ENCODE measurements at regions of chr10 and their contacts with region 1.

Region 1: DNA sequence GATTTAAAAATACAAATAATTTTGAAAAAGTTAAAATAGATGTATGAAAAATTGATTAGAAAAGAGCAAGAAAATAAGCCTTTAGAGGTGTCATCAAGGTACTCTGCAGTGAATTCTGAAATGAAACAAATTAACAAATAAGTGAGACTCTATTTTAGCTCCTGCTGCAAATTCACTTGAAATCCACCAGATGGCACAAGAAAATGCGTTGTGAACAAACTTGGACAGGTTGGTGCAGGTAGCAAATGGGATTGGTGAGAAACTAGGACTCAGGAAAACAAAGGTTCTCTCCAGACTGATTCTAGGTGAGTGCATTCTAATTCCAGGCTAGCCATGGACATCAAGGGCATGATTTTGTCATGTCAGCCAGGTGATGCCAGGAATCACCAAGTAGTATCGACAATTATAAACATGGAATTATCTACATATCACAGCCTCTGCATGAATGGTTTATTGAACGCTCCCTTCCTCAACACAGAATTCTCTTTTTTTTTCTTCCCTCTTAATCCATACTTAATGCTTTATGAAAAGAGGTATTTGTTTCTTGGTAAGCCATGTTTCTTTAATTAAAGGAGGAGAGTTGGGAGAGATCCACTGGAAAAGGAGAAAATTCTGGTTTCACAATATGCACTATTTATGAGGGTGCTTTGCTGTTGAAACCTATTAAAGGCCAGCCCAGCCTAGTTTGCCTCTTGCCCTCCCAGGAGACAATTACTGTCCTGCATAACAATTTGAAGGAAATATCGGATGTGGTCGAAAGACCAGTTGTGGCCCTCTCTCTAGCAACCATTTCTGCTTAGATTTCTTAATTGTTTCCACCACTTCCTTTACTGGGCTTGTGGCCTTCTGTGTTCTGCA is 118.1 kb downstream of the ZNF365 start:
- DNase-seq: no peak
- ATAC-seq: peak; percentile 49
- H3K4me3 Mint-ChIP-seq: no peak overlapping the region
- H3K27ac Mint-ChIP-seq: no peak overlapping the region
- H3K4me1 Mint-ChIP-seq: peaks cover 27% of the 10 kb centered on the region
- H3K27me3 Mint-ChIP-seq: peaks cover 4% of the 10 kb centered on the region
- CTCF ChIP-seq: no peak

Region 2: GRCh38 chr10:62264702-62265436 is 227.4 kb before region 1 on chr10:
- CTCF ChIA-PET with region 1: no interaction called
- POLR2A ChIA-PET with region 1: no interaction called
- intact Hi-C with region 1: no loop called
- DNase-seq: no peak
- ATAC-seq: no peak
- H3K4me3 Mint-ChIP-seq: no peak overlapping the region
- H3K27ac Mint-ChIP-seq: no peak overlapping the region
- H3K4me1 Mint-ChIP-seq: peaks cover 13% of the 10 kb centered on the region
- H3K27me3 Mint-ChIP-seq: no peaks in the 10 kb centered on the region
- CTCF ChIP-seq: no peak

Region 3: GRCh38 chr10:62456611-62457101 is 35.6 kb before region 1 on chr10:
- CTCF ChIA-PET with region 1: interaction called, 4 read pairs
- POLR2A ChIA-PET with region 1: no interaction called
- intact Hi-C with region 1: loop called (anchors 5 kb)
- DNase-seq: peak; percentile 22
- ATAC-seq: peak; percentile 93
- H3K4me3 Mint-ChIP-seq: peak overlapping the region; percentile 53
- H3K27ac Mint-ChIP-seq: peak overlapping the region; percentile 74
- H3K4me1 Mint-ChIP-seq: peaks cover 39% of the 10 kb centered on the region
- H3K27me3 Mint-ChIP-seq: no peaks in the 10 kb centered on the region
- CTCF ChIP-seq: no peak

Region 4: GRCh38 chr10:62541811-62542210 is 49.6 kb after region 1 on chr10:
- CTCF ChIA-PET with region 1: interaction called, 3 read pairs
- POLR2A ChIA-PET with region 1: no interaction called
- intact Hi-C with region 1: loop called (anchors 5 kb)
- DNase-seq: no peak
- ATAC-seq: peak; percentile 74
- H3K4me3 Mint-ChIP-seq: no peak overlapping the region
- H3K27ac Mint-ChIP-seq: peak overlapping the region; percentile 57
- H3K4me1 Mint-ChIP-seq: peaks cover 73% of the 10 kb centered on the region
- H3K27me3 Mint-ChIP-seq: no peaks in the 10 kb centered on the region
- CTCF ChIP-seq: no peak

Region 5: GRCh38 chr10:62554632-62555199 is 62.5 kb after region 1 on chr10:
- CTCF ChIA-PET with region 1: no interaction called
- POLR2A ChIA-PET with region 1: no interaction called
- intact Hi-C with region 1: loop called (anchors 2 kb)
- DNase-seq: no peak
- ATAC-seq: peak; percentile 60
- H3K4me3 Mint-ChIP-seq: no peak overlapping the region
- H3K27ac Mint-ChIP-seq: peak overlapping the region; percentile 22
- H3K4me1 Mint-ChIP-seq: peaks cover 7% of the 10 kb centered on the region
- H3K27me3 Mint-ChIP-seq: peaks cover 2% of the 10 kb centered on the region
- CTCF ChIP-seq: no peak

Region 6: DNA sequence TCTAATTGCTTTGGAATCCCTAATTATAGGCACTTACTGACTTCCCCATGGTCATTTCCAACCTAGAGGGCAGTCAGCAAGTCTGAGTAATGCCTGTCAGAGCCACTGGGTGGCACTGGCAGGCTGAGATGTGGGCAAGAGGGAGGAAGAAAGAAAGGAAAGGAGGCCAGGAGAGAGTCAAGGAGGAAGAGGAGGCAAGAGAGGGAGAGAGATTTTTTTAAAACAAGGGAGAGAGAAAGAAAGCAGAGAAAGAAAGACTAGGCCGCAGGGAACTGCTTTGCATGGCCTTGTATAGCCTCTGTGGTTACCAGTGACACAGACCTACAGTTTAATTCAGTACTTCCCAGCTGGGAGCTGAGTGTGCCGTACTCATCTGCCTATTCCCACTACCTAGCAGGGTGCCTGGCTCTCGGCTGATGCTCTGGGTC is 101.9 kb after region 1 on chr10:
- CTCF ChIA-PET with region 1: interaction called, 13 read pairs
- POLR2A ChIA-PET with region 1: no interaction called
- intact Hi-C with region 1: loop called (anchors 1 kb)
- DNase-seq: peak; percentile 41
- ATAC-seq: peak; percentile 88
- H3K4me3 Mint-ChIP-seq: no peak overlapping the region
- H3K27ac Mint-ChIP-seq: no peak overlapping the region
- H3K4me1 Mint-ChIP-seq: peaks cover 16% of the 10 kb centered on the region
- H3K27me3 Mint-ChIP-seq: no peaks in the 10 kb centered on the region
- CTCF ChIP-seq: peak; percentile 74

Region 7: DNA sequence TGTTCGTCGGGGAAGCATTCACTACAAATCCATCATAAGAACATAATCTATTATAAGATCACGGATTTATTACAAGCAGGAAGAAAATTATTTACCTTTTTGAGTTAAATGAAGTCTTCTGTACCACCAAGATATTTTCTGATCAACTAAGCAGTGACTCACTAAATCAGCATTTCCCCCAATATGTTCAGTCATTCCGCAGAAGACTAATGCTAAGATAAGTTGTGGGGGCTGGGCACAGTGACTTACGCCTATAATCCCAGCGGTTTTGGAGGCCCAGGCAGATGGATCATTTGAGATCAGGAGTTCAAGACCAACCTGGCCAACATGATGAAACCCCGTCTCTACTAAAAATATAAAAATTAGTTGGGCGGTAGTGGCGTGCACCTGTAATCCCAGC is 468.2 kb after region 1 on chr10:
- CTCF ChIA-PET with region 1: no interaction called
- POLR2A ChIA-PET with region 1: no interaction called
- intact Hi-C with region 1: no loop called
- DNase-seq: no peak
- ATAC-seq: no peak
- H3K4me3 Mint-ChIP-seq: no peak overlapping the region
- H3K27ac Mint-ChIP-seq: no peak overlapping the region
- H3K4me1 Mint-ChIP-seq: no peaks in the 10 kb centered on the region
- H3K27me3 Mint-ChIP-seq: peaks cover 7% of the 10 kb centered on the region
- CTCF ChIP-seq: no peak

Region 8: GRCh38 chr10:63083904-63084689 is 591.9 kb after region 1 on chr10:
- CTCF ChIA-PET with region 1: interaction called, 13 read pairs
- POLR2A ChIA-PET with region 1: no interaction called
- intact Hi-C with region 1: loop called (anchors 1 kb)
- DNase-seq: no peak
- ATAC-seq: peak; percentile 77
- H3K4me3 Mint-ChIP-seq: no peak overlapping the region
- H3K27ac Mint-ChIP-seq: no peak overlapping the region
- H3K4me1 Mint-ChIP-seq: no peaks in the 10 kb centered on the region
- H3K27me3 Mint-ChIP-seq: peaks cover 9% of the 10 kb centered on the region
- CTCF ChIP-seq: peak; percentile 53

Region 9: DNA sequence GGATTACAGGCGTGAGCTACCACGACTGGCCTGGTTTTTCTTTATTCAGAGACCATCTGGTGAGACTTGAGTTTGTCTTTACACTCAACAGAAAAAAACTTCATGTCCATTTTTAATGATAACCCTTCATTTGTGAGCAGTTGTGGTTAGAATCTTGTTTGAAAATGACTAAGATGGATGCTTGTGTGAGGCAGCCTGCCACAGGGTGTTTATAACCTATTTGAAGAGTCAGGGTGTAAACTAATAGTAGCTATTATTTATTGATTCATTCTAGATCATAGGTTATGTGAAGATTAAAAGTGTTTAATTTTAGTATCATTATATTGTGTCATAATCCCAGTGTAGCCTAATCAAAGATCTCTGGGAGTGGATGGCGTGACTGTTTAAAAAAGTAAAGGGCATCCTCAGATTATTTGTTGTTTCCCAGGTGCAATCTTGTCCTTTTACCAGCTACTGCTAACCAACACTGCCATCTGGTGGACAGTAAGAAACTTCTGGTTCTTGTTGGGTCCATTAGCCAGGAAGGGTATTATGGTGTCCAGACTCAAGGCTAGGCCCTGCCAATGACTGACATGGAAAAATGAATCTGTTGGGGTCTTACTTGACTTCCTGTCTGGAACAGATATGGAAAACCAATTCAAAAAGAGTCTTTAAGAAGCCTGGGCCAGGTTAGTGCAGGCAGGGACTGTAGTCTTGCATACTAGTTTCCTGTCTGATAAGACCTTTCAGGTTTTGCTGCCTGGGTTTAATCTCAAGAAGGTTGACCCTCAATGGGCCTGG is 665.8 kb after region 1 on chr10:
- CTCF ChIA-PET with region 1: interaction called, 15 read pairs
- POLR2A ChIA-PET with region 1: no interaction called
- intact Hi-C with region 1: loop called (anchors 1 kb)
- DNase-seq: no peak
- ATAC-seq: peak; percentile 67
- H3K4me3 Mint-ChIP-seq: no peak overlapping the region
- H3K27ac Mint-ChIP-seq: no peak overlapping the region
- H3K4me1 Mint-ChIP-seq: peaks cover 9% of the 10 kb centered on the region
- H3K27me3 Mint-ChIP-seq: no peaks in the 10 kb centered on the region
- CTCF ChIP-seq: no peak